Motor neuron (in vitro differentiated cells): ENCODE measurements at regions of chr6 and their contacts with region 1.

Region 1: GRCh38 chr6:27078734-27079357 is 168.7 kb upstream of the PRSS16 start:
- ATAC-seq: peak; percentile 42 to 99 (median 86)
- H3K4me3 ChIP-seq: peak overlapping the region; percentile 19 to 33 (median 25)
- H3K27ac ChIP-seq: no peak overlapping the region
- H3K4me1 ChIP-seq: no peaks in the 10 kb centered on the region

Region 2: DNA sequence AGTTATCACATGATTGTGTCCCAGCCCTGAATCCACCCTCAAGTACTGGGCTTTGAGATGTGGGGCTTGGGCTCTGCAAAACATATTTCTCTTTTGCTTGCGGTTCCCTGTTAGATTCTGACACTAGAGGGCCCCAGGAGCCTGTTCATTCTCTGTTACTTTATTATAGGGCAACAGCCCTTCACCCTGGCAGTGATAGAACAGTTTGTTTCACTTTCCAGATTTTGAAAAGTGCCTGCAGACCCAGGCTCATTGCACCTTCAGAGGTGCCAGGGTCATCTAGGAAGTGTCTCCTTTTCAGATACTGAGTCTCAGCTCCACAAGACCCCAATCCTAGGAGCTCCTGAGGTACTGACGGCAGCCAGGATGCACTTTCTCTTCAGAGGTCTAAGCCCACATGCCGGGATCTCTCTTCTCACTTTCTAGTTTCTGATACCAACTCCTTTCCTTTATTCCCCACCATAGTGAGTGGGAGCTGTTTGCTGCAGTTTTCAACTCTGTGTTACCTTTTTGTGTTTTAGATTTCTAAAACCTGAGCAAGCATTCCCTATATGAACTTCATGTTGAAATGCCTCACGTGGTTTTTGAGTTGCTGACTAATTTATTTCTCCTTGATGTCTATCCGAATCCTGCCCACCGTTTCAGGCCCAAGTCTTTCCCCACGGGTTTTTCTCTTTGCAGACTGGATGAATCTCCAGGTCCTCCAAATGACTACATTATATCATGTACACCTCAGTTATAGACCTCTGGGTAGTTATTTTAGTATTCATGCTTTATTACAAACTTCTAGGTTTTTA is 471.2 kb before region 1 on chr6:
- in situ Hi-C with region 1: loop called in 2 of 9 experiments (anchors 5 to 10 kb)
- ATAC-seq: peak; percentile 63 to 98 (median 81)
- H3K4me3 ChIP-seq: no peak overlapping the region
- H3K27ac ChIP-seq: no peak overlapping the region
- H3K4me1 ChIP-seq: no peaks in the 10 kb centered on the region

Region 3: GRCh38 chr6:27472617-27473400 is 394.0 kb after region 1 on chr6 and contains the start of gene ZNF184:
- in situ Hi-C with region 1: no loop called
- ATAC-seq: peak; percentile 90 to 97 (median 95)
- H3K4me3 ChIP-seq: peak within 1 kb of the TSS; percentile 58 to 88 (median 72)
- H3K27ac ChIP-seq: peak within 1 kb of the TSS; percentile 81 to 86
- H3K4me1 ChIP-seq: peaks cover 0 to 8% of the 10 kb centered on the region in 2 donors
- total RNA-seq, gene ZNF184: 5.0 to 17.7 (median 13.7) TPM

Region 4: DNA sequence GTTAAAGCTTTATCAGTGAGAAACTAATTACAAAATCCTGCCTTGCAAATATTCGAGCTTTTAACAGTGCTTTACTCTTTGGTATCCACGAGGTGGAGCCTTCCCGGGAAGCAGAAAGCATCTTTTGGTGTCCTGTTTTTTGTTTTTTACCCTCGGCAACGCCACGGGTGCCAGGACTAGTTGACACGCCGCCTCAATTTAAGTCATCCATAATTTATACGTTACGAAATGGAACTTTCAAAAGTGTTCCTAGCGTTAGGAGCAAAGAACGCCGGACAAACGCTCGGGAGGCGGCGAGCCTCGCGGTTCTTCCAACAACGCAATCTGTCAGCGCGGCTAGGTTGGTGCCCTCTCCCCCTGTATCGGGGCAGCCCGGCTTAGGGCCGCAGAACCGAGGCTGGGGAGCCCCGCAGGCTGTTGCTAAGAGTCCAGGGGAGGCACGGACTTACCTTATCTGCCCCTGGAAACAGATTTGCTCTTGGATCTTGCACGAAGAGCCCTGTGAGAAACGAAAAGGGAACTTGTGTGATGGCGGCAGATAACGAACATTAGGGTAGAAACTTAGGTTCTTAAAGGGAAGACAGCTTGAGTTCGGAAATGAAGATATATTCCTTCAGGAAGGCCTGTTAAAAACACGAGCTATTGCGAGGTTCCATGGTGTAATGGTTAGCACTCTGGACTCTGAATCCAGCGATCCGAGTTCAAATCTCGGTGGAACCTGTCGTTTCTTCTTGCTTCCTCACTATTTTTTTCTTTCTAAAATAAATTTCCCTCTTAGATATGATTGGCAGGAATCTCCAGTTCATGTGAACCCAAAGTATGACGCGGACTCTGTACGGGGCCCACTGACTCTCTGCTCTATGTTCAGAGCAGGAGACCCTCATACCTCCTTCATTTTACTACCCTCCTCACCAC is 440.3 kb after region 1 on chr6:
- in situ Hi-C with region 1: no loop called
- ATAC-seq: peak; percentile 86 to 90 (median 88)
- H3K4me3 ChIP-seq: peak overlapping the region; percentile 56 to 86 (median 80)
- H3K27ac ChIP-seq: peak overlapping the region in 1 of 2 donors; percentile 54
- H3K4me1 ChIP-seq: no peaks in the 10 kb centered on the region